Gastrocnemius medialis (tissue), 4 donors: ENCODE measurements at regions of chr5 and their contacts with region 1.

Region 1: DNA sequence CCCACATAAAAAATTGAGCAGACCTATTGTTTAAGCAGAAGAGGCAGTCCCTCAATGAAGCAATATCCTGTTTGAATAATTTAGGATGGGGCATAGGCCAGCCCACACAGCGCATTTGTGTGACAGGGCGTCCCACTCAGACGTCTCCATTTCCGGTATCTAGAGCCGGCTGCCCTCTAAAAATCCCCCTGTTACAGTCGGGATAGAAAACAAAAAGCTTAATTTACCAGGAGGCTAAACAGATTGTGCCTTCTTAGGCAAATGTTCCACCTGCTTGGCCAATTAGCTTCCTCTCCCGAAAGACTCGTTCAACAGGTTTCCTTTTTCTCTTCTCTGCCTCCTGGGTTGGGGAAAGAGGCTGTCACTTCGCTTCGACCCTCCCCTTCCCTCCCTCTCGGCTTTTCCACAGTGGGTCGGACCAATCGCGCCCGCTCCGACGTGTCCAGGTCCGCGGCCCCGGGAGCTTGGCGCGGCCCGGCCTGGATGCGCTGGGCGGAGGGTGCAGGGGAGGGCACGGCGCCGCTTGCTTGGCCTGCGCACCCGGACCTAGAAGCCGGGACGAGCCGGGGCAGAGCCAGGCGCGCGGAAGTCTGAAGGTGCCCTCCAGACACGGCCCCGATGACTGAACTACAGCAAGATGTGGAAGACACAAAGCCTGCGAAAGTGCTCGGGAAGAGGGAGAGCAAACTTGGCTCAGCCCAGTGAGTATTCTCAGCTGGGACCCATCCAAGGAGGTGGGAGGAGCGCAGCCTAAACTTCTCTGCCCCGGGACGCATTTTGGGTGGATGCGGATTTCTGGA is at the start of gene GRAMD2B:
- DNase-seq: peak; percentile 51 to 72
- ATAC-seq: peak; percentile 89 to 90
- H3K4me3 ChIP-seq: peak within 1 kb of the TSS; percentile 55 to 73 (median 68)
- H3K27ac ChIP-seq: peak within 1 kb of the TSS; percentile 78 to 85 (median 81)
- H3K4me1 ChIP-seq: no peaks in the 10 kb centered on the region
- H3K27me3 ChIP-seq: no peaks in the 10 kb centered on the region
- CTCF ChIP-seq: no peak
- POLR2A ChIP-seq: peak; percentile 60 to 72
- total RNA-seq, gene GRAMD2B: 4.6 to 10.4 (median 8.9) TPM

Region 2: GRCh38 chr5:125463466-125464092 is 959.6 kb before region 1 on chr5:
- in situ Hi-C with region 1: no loop called
- intact Hi-C with region 1: no loop called
- DNase-seq: no peak
- ATAC-seq: no peak
- H3K4me3 ChIP-seq: no peak overlapping the region
- H3K27ac ChIP-seq: no peak overlapping the region
- H3K4me1 ChIP-seq: no peaks in the 10 kb centered on the region
- H3K27me3 ChIP-seq: no peaks in the 10 kb centered on the region
- CTCF ChIP-seq: no peak
- POLR2A ChIP-seq: no peak

Region 3: DNA sequence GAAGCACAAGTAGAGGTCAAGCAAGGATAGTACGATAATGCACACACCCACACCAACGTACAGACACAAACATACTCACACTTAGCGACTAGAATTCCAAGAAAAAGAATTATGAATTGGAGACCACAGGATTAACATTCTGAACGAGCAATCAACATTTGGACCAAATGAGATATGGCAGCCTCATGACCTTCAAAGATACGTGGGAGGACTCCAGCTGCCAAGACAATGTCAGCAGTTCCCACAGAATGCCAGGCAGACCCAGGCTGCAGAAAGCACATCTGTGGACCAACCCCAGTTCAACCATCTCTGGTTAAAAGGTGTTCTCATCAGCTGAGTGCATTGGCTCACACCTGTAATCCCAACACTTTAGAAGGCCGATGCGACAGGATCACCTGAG is 187.6 kb before region 1 on chr5:
- in situ Hi-C with region 1: no loop called
- intact Hi-C with region 1: no loop called
- DNase-seq: no peak
- ATAC-seq: no peak
- H3K4me3 ChIP-seq: no peak overlapping the region
- H3K27ac ChIP-seq: no peak overlapping the region
- H3K4me1 ChIP-seq: no peaks in the 10 kb centered on the region
- H3K27me3 ChIP-seq: no peaks in the 10 kb centered on the region
- CTCF ChIP-seq: no peak
- POLR2A ChIP-seq: no peak

Region 4: GRCh38 chr5:126332326-126332725 is 90.9 kb before region 1 on chr5:
- in situ Hi-C with region 1: no loop called
- intact Hi-C with region 1: no loop called
- DNase-seq: no peak
- ATAC-seq: no peak
- H3K4me3 ChIP-seq: no peak overlapping the region
- H3K27ac ChIP-seq: no peak overlapping the region
- H3K4me1 ChIP-seq: no peaks in the 10 kb centered on the region
- H3K27me3 ChIP-seq: no peaks in the 10 kb centered on the region
- CTCF ChIP-seq: no peak
- POLR2A ChIP-seq: no peak

Region 5: DNA sequence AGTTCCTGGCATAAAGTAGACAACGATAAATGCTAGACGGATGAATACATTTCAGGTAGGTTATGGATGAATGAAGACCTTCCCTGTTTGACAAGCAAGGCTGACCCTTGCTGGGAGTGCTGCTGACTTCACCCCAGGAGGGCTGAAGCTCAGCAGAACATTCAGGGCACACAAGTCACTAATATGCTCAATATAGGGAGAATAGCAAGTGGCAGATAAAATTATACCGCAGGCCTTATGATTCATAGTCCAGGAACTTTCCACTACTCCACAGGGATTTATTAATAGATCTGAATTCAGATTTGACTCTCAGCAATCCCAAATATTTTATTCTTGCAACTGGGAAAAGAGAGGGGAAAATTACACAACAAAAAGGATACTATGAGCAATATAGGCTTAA is 38.2 kb before region 1 on chr5:
- in situ Hi-C with region 1: no loop called
- intact Hi-C with region 1: loop called (anchors 5 kb)
- DNase-seq: no peak
- ATAC-seq: peak; percentile 64 to 87
- H3K4me3 ChIP-seq: no peak overlapping the region
- H3K27ac ChIP-seq: peak overlapping the region; percentile 59 to 75 (median 64)
- H3K4me1 ChIP-seq: peaks cover 32 to 35% of the 10 kb centered on the region in 2 donors
- H3K27me3 ChIP-seq: no peaks in the 10 kb centered on the region
- CTCF ChIP-seq: no peak
- POLR2A ChIP-seq: no peak